GM12878 (cell line): ENCODE measurements at regions of chr11 and their contacts with region 1.

Region 1: GRCh38 chr11:6234387-6235107 is at the start of gene FHIP1B:
- DNase-seq: peak; percentile 99
- ATAC-seq: peak; percentile 94
- H3K4me3 ChIP-seq: peak within 1 kb of the TSS; percentile 90
- H3K27ac ChIP-seq: peak within 1 kb of the TSS; percentile 75
- H3K4me1 ChIP-seq: peaks cover 3% of the 10 kb centered on the region; the same call in 1 of the 2 replicates
- H3K27me3 ChIP-seq: no peaks in the 10 kb centered on the region
- CTCF ChIP-seq: no peak
- EP300 ChIP-seq: no peak
- POLR2A ChIP-seq: peak; percentile 83
- RAD21 ChIP-seq: no peak
- polyA plus RNA-seq, gene FHIP1B: 0.90 to 1.3 TPM

Region 2: GRCh38 chr11:6203327-6203726 is 31.2 kb before region 1 on chr11:
- CTCF ChIA-PET with region 1: no interaction called
- POLR2A ChIA-PET with region 1: interaction called, 3 read pairs
- RAD21 ChIA-PET with region 1: interaction called, 3 read pairs
- SMC1A ChIA-PET with region 1: interaction called, 12 read pairs
- in situ Hi-C with region 1: no loop called
- intact Hi-C with region 1: no loop called
- DNase-seq: peak; percentile 58
- ATAC-seq: peak; percentile 86
- H3K4me3 ChIP-seq: no peak overlapping the region
- H3K27ac ChIP-seq: 0 out of 2 replicates have a peak overlapping the region, but pooled peaks have one; percentile 0
- H3K4me1 ChIP-seq: peaks cover 9% of the 10 kb centered on the region
- H3K27me3 ChIP-seq: no peaks in the 10 kb centered on the region
- CTCF ChIP-seq: no peak
- EP300 ChIP-seq: no peak
- POLR2A ChIP-seq: no peak
- RAD21 ChIP-seq: no peak

Region 3: GRCh38 chr11:6216501-6216900 is 18.0 kb before region 1 on chr11:
- CTCF ChIA-PET with region 1: interaction called, 12 read pairs
- POLR2A ChIA-PET with region 1: interaction called, 3 read pairs
- RAD21 ChIA-PET with region 1: interaction called, 4 read pairs
- SMC1A ChIA-PET with region 1: interaction called, 4 read pairs
- in situ Hi-C with region 1: no loop called
- intact Hi-C with region 1: no loop called
- DNase-seq: no peak
- ATAC-seq: no peak
- H3K4me3 ChIP-seq: no peak overlapping the region
- H3K27ac ChIP-seq: no peak overlapping the region
- H3K4me1 ChIP-seq: no peaks in the 10 kb centered on the region
- H3K27me3 ChIP-seq: no peaks in the 10 kb centered on the region
- CTCF ChIP-seq: no peak
- EP300 ChIP-seq: no peak
- POLR2A ChIP-seq: no peak
- RAD21 ChIP-seq: no peak

Region 4: GRCh38 chr11:6251120-6251733 is 16.7 kb after region 1 on chr11:
- CTCF ChIA-PET with region 1: interaction called, 55 read pairs
- POLR2A ChIA-PET with region 1: no interaction called
- RAD21 ChIA-PET with region 1: no interaction called
- SMC1A ChIA-PET with region 1: interaction called, 14 read pairs
- in situ Hi-C with region 1: no loop called
- intact Hi-C with region 1: no loop called
- DNase-seq: no peak
- ATAC-seq: peak; percentile 91
- H3K4me3 ChIP-seq: no peak overlapping the region
- H3K27ac ChIP-seq: no peak overlapping the region
- H3K4me1 ChIP-seq: no peaks in the 10 kb centered on the region
- H3K27me3 ChIP-seq: 0 out of 4 replicates have a peak, but pooled peaks cover 0 to 3% of the 10 kb centered on the region in 2 experiments
- CTCF ChIP-seq: peak; percentile 68 to 86 (median 75)
- EP300 ChIP-seq: no peak
- POLR2A ChIP-seq: no peak
- RAD21 ChIP-seq: peak; percentile 56

Region 5: GRCh38 chr11:6481012-6481923 is 246.7 kb after region 1 on chr11 and contains the starts of genes ARFIP2 and TIMM10B:
- CTCF ChIA-PET with region 1: no interaction called
- POLR2A ChIA-PET with region 1: interaction called, 6 read pairs
- RAD21 ChIA-PET with region 1: no interaction called
- SMC1A ChIA-PET with region 1: no interaction called
- in situ Hi-C with region 1: no loop called
- intact Hi-C with region 1: loop called (anchors 10 kb)
- DNase-seq: peak; percentile 91
- ATAC-seq: peak; percentile 98
- H3K4me3 ChIP-seq: peak within 1 kb of the TSS; percentile 98
- H3K27ac ChIP-seq: peak within 1 kb of the TSS; percentile 80
- H3K4me1 ChIP-seq: peaks cover 19% of the 10 kb centered on the region
- H3K27me3 ChIP-seq: no peaks in the 10 kb centered on the region
- CTCF ChIP-seq: no peak
- EP300 ChIP-seq: no peak
- POLR2A ChIP-seq: peak; percentile 98
- RAD21 ChIP-seq: no peak
- polyA plus RNA-seq, gene ARFIP2: 11.7 to 18.9 TPM
- polyA plus RNA-seq, gene TIMM10B: 93.3 to 126 TPM

Region 6: DNA sequence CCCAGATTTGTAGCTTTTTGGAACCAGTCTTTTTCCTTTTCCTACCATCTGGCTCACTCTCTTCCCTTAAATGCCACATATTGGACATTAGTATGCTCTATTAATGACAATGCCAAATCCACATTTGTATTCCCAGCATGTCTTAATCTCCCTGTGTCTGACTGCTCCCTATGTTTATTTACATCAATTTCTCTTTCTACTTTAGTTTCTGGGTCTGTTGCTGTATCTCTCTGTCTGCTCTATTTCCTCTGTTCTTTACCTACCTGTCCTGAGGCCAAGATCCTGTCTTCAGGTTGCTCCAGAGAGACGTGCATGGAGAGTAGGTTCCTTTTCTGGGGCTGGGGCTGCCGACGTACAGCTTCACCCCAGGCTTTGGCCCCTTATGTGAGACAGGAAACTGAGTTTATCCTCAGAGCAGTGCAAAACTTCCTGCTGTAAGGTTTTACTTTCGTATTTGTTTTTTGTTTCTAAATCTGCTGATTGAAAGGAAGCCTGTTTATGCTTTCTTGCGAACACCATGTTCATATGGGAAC is 511.6 kb after region 1 on chr11:
- CTCF ChIA-PET with region 1: no interaction called
- POLR2A ChIA-PET with region 1: no interaction called
- RAD21 ChIA-PET with region 1: no interaction called
- SMC1A ChIA-PET with region 1: no interaction called
- in situ Hi-C with region 1: no loop called
- intact Hi-C with region 1: loop called (anchors 10 kb)
- DNase-seq: peak; percentile 68
- ATAC-seq: peak; percentile 83
- H3K4me3 ChIP-seq: peak overlapping the region; percentile 71
- H3K27ac ChIP-seq: peak overlapping the region; percentile 99
- H3K4me1 ChIP-seq: peaks cover 22% of the 10 kb centered on the region; the same call in 1 of the 2 replicates
- H3K27me3 ChIP-seq: no peaks in the 10 kb centered on the region
- CTCF ChIP-seq: no peak
- EP300 ChIP-seq: no peak
- POLR2A ChIP-seq: peak; percentile 83
- RAD21 ChIP-seq: no peak